HepG2 (cell line): ENCODE measurements at regions of chr4 and their contacts with region 1.

Region 1: GRCh38 chr4:25376754-25377571 is at the start of gene ANAPC4:
- DNase-seq: peak; percentile 84
- ATAC-seq: peak; percentile 94
- H3K4me3 ChIP-seq: peak within 1 kb of the TSS; percentile 92 to 95 (median 95)
- H3K27ac ChIP-seq: peak within 1 kb of the TSS; percentile 70
- H3K4me1 ChIP-seq: peaks cover 68% of the 10 kb centered on the region
- H3K27me3 ChIP-seq: no peaks in the 10 kb centered on the region
- CTCF ChIP-seq: peak; percentile 14; the same call in 1 of the 2 replicates
- EP300 ChIP-seq: no peak
- POLR2A ChIP-seq: peak; percentile 85 to 87
- RAD21 ChIP-seq: peak; percentile 41; the same call in 1 of the 2 replicates
- total RNA-seq, gene ANAPC4: 29.4 and 30.2 TPM in 2 replicates

Region 2: GRCh38 chr4:25234390-25235370 is 142.3 kb before region 1 on chr4:
- CTCF ChIA-PET with region 1: no interaction called
- POLR2A ChIA-PET with region 1: interaction called, 3 read pairs
- in situ Hi-C with region 1: no loop called
- intact Hi-C with region 1: loop called (anchors 10 kb)
- DNase-seq: peak; percentile 89
- ATAC-seq: peak; percentile 79
- H3K4me3 ChIP-seq: peak overlapping the region; percentile 84 to 98 (median 91)
- H3K27ac ChIP-seq: peak overlapping the region; percentile 79
- H3K4me1 ChIP-seq: peaks cover 35% of the 10 kb centered on the region
- H3K27me3 ChIP-seq: no peaks in the 10 kb centered on the region; a peak in 1 of 5 replicates
- CTCF ChIP-seq: peak; percentile 33
- EP300 ChIP-seq: no peak
- POLR2A ChIP-seq: peak in 1 of 2 experiments; percentile 42; a peak in 1 of 4 replicates
- RAD21 ChIP-seq: no peak

Region 3: GRCh38 chr4:25448379-25449109 is 71.6 kb after region 1 on chr4:
- CTCF ChIA-PET with region 1: no interaction called
- POLR2A ChIA-PET with region 1: no interaction called
- in situ Hi-C with region 1: no loop called
- intact Hi-C with region 1: no loop called
- DNase-seq: no peak
- ATAC-seq: no peak
- H3K4me3 ChIP-seq: no peak overlapping the region
- H3K27ac ChIP-seq: no peak overlapping the region
- H3K4me1 ChIP-seq: no peaks in the 10 kb centered on the region
- H3K27me3 ChIP-seq: no peaks in the 10 kb centered on the region
- CTCF ChIP-seq: no peak
- EP300 ChIP-seq: no peak
- POLR2A ChIP-seq: no peak
- RAD21 ChIP-seq: no peak